ENCODE measurements at regions of chr10 and their contacts with region 1.

Region 1: DNA sequence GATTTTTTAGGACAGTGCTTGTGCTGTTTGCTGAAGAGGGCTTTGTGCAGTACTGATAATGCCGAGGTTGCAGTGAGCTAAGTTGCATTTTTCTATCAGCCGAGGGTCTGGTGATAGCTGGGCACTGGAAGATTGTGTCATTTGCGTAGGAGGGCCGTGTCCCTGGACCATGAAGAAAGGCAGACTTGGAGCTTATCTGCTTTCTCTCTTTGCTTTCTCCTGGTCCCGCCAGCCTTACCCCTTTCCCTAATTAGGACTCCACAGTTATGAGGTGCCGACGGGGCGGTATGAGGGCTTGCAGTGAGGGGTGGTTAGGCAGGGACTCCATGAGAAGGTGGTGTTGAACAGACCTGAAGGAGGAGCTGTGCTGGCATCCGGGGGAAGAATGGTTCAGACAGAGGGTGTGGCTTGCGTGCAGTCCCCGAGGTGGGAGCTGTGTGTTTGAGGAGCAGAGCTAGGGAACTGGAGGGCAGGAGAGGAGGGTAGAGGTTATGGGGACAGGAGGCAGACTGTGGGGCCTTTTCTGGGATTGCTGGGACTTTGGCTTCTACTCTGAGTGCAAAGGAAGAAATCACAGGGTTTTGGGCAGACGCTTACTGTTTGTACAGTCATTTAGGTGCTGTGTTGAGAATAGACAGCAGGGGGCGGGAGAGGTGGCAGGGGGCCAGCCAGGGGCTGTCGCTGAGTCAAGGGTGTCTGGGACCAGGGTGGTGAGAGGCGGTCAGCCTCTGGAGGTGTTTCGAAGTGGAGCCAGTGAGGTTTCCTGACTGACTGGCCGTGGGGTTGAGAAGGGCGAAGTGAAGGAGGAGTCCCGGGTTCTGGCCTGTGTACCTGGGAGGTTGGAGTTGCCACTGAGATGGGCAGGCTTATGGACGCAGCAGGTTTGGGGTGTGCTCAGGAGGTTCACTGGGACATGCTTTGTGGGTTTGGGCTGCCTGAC is 43.4 kb downstream of the PRF1 start:
- DNase-seq: peak; percentile 91
- ATAC-seq: peak; percentile 95
- H3K4me3 Mint-ChIP-seq: peak overlapping the region; percentile 74
- H3K27ac Mint-ChIP-seq: peak overlapping the region; percentile 86
- H3K4me1 Mint-ChIP-seq: peaks cover 23% of the 10 kb centered on the region
- H3K27me3 Mint-ChIP-seq: peaks cover 1% of the 10 kb centered on the region
- CTCF ChIP-seq: peak; percentile 70

Region 2: GRCh38 chr10:70619271-70620019 is 60.3 kb after region 1 on chr10:
- CTCF ChIA-PET with region 1: interaction called, 26 read pairs
- POLR2A ChIA-PET with region 1: interaction called, 3 read pairs
- intact Hi-C with region 1: loop called (anchors 10 kb)
- DNase-seq: no peak
- ATAC-seq: no peak
- H3K4me3 Mint-ChIP-seq: no peak overlapping the region
- H3K27ac Mint-ChIP-seq: peak overlapping the region; percentile 81
- H3K4me1 Mint-ChIP-seq: peaks cover 47% of the 10 kb centered on the region
- H3K27me3 Mint-ChIP-seq: no peaks in the 10 kb centered on the region
- CTCF ChIP-seq: peak; percentile 82

Region 3: GRCh38 chr10:70880077-70880534 is 321.0 kb after region 1 on chr10:
- CTCF ChIA-PET with region 1: no interaction called
- POLR2A ChIA-PET with region 1: no interaction called
- intact Hi-C with region 1: loop called (anchors 5 kb)
- DNase-seq: peak; percentile 88
- ATAC-seq: peak; percentile 97
- H3K4me3 Mint-ChIP-seq: no peak overlapping the region
- H3K27ac Mint-ChIP-seq: no peak overlapping the region
- H3K4me1 Mint-ChIP-seq: peaks cover 5% of the 10 kb centered on the region
- H3K27me3 Mint-ChIP-seq: no peaks in the 10 kb centered on the region
- CTCF ChIP-seq: peak; percentile 87